Sigmoid colon (tissue), 7 donors: ENCODE measurements at regions of chrX and their contacts with region 1.

Region 1: DNA sequence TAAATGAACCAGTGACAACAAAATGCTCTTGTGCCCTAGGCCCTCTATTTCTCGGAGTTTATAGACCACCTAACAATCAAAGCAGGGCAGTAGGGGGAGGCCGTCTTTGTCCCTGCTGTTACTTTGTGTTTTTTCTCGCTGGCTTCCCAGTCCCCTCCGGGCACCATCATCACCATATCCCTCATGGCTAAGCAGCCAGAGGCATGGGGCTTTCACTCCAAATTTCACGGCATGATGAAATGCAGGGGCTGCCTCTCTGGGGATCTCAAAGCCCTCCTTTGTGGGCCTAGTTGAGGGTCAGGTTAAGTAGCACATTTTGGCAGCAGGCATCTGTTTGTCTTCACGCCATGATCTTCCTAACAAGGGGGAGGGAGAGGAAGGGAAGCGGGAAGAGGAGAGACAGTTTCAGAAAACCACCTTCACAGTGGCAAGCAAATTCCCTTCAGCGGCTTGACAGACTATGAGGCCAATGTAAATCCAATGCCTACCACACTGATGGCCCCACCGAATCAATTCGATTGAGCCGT is 91.9 kb downstream of the ANOS1 start:
- DNase-seq: no peak
- H3K4me3 ChIP-seq: no peak overlapping the region
- H3K27ac ChIP-seq: no peak overlapping the region
- H3K4me1 ChIP-seq: no peaks in the 10 kb centered on the region
- H3K27me3 ChIP-seq: no peaks in the 10 kb centered on the region
- CTCF ChIP-seq: no peak
- EP300 ChIP-seq: no peak
- POLR2A ChIP-seq: no peak

Region 2: DNA sequence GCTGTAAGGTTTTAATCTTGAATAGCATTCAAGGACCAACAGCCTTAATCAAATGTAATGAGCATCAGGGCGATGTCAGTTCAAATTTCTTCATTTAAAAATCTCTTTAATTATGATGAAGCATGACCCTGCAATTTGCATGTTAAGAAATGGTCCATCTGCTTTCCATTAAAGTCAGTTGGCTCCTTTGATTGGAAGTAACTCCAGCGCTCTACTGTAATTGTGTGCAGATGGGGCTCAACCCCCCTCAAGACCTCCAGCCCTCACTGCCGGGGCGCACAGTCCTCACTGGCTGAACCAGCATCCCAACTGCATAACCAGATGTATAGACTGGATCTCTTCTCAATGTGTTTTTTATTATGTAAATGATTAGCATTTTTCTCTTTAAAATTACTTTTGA is 48.5 kb before region 1 on chrX:
- intact Hi-C with region 1: loop called (anchors 5 kb)
- DNase-seq: no peak
- H3K4me3 ChIP-seq: no peak overlapping the region
- H3K27ac ChIP-seq: no peak overlapping the region
- H3K4me1 ChIP-seq: no peaks in the 10 kb centered on the region
- H3K27me3 ChIP-seq: no peaks in the 10 kb centered on the region
- CTCF ChIP-seq: no peak
- EP300 ChIP-seq: no peak
- POLR2A ChIP-seq: no peak

Region 3: GRCh38 chrX:8607326-8607725 is 32.7 kb before region 1 on chrX:
- intact Hi-C with region 1: no loop called
- DNase-seq: no peak
- H3K4me3 ChIP-seq: no peak overlapping the region
- H3K27ac ChIP-seq: no peak overlapping the region
- H3K4me1 ChIP-seq: no peaks in the 10 kb centered on the region
- H3K27me3 ChIP-seq: no peaks in the 10 kb centered on the region
- CTCF ChIP-seq: no peak
- EP300 ChIP-seq: no peak
- POLR2A ChIP-seq: no peak

Region 4: DNA sequence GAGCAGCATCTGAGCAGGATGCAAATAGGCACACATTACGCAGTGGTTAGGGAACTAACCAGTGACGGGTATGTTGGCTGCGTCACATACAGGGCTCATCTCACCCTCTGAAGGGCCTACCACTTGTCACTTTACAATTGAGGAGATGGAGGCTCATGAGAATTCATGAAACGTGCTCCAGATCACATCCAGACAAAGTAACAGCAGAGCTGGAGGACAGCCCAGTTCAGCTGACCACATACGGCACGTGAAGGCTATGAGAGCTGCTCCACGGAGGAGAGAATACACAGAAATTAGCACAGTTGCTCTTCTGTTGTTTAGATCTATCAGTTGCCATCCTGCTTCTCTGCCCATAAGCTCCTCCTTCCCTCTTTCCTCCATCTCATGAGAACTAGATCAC is 315.5 kb after region 1 on chrX:
- intact Hi-C with region 1: no loop called
- DNase-seq: no peak
- H3K4me3 ChIP-seq: no peak overlapping the region
- H3K27ac ChIP-seq: no peak overlapping the region
- H3K4me1 ChIP-seq: no peaks in the 10 kb centered on the region
- H3K27me3 ChIP-seq: no peaks in the 10 kb centered on the region
- CTCF ChIP-seq: no peak
- EP300 ChIP-seq: no peak
- POLR2A ChIP-seq: no peak